ENCODE measurements at regions of chr16 and their contacts with region 1.

Region 1: DNA sequence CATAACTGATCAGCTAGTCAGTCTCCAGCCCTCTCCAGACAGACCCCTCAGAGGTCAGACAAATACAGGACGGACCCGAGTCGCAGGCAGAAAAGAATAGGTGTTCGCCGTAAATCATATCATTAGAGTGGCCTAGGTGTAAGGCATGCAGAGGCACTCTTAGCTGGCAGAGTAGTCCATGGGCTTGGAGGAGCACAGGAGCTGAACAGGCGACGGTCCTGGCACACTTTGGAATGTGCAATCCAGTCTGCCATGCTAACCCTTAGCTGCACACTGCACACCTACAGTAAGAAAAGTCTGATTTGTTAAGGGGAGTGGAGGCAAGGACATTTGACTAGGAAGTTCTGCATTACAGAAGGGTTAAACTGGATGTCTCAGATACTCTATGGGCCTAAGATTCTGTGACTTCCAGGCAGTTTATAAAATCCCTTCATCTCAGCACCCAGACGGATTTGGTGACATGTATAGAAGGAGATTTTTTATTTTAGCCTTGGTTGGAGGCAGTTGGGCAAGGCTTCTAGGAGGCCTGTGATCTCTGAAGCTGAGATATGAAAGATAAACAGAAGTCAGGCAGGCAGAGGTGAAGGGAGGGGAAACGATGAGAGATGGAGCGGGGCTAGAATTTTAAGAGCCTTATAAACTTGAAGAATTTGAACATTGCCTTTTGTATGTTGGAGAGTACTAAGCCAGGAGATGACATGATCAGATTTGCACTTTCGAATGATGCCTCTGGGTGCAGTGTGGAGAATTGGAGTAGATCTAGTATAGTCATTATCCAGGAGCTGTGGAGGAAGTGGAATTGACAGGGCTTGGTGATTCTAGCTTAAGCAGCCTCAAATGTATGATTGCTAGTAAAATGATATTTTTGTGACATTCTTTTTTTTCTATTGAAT is 34.6 kb upstream of the SLC5A11 start:
- DNase-seq: no peak
- H3K4me3 Mint-ChIP-seq: no peak overlapping the region
- H3K27ac Mint-ChIP-seq: no peak overlapping the region
- H3K4me1 Mint-ChIP-seq: no peaks in the 10 kb centered on the region
- H3K27me3 Mint-ChIP-seq: no peaks in the 10 kb centered on the region

Region 2: GRCh38 chr16:24568392-24568791 is 242.8 kb before region 1 on chr16:
- intact Hi-C with region 1: loop called (anchors 10 kb)
- DNase-seq: no peak
- H3K4me3 Mint-ChIP-seq: no peak overlapping the region
- H3K27ac Mint-ChIP-seq: no peak overlapping the region
- H3K4me1 Mint-ChIP-seq: peaks cover 6% of the 10 kb centered on the region
- H3K27me3 Mint-ChIP-seq: no peaks in the 10 kb centered on the region

Region 3: GRCh38 chr16:24789881-24790280 is 21.3 kb before region 1 on chr16:
- intact Hi-C with region 1: no loop called
- DNase-seq: no peak
- H3K4me3 Mint-ChIP-seq: no peak overlapping the region
- H3K27ac Mint-ChIP-seq: no peak overlapping the region
- H3K4me1 Mint-ChIP-seq: no peaks in the 10 kb centered on the region
- H3K27me3 Mint-ChIP-seq: no peaks in the 10 kb centered on the region

Region 4: GRCh38 chr16:24834459-24835335 is 23.5 kb after region 1 on chr16:
- intact Hi-C with region 1: no loop called
- DNase-seq: no peak
- H3K4me3 Mint-ChIP-seq: no peak overlapping the region
- H3K27ac Mint-ChIP-seq: no peak overlapping the region
- H3K4me1 Mint-ChIP-seq: no peaks in the 10 kb centered on the region
- H3K27me3 Mint-ChIP-seq: no peaks in the 10 kb centered on the region

Measured in activated CD4-positive, alpha-beta T cell treated with anti-CD3 and anti-CD28 coated beads, Interleukin-2, amount 10 ng/mL, durations not matched to agents 24 days and 14 days (primary cell).